Activated CD4-positive, alpha-beta T cell treated with anti-CD3 and anti-CD28 coated beads for 36 hours (primary cell): ENCODE measurements at regions of chr19 and their contacts with region 1.

Region 1: GRCh38 chr19:10000171-10000826 is 10.0 kb downstream of the COL5A3 start:
- DNase-seq: peak; percentile 85
- ATAC-seq: peak; percentile 62
- H3K4me3 Mint-ChIP-seq: no peak overlapping the region
- H3K27ac Mint-ChIP-seq: no peak overlapping the region
- H3K4me1 Mint-ChIP-seq: peaks cover 8% of the 10 kb centered on the region
- H3K27me3 Mint-ChIP-seq: peaks cover 27% of the 10 kb centered on the region

Region 2: GRCh38 chr19:9205501-9206113 is 794.7 kb before region 1 on chr19:
- CTCF ChIA-PET with region 1: no interaction called
- POLR2A ChIA-PET with region 1: no interaction called
- intact Hi-C with region 1: loop called in 1 of 2 experiments (anchors 5 kb)
- DNase-seq: peak; percentile 79
- ATAC-seq: peak; percentile 75
- H3K4me3 Mint-ChIP-seq: no peak overlapping the region
- H3K27ac Mint-ChIP-seq: no peak overlapping the region
- H3K4me1 Mint-ChIP-seq: no peaks in the 10 kb centered on the region
- H3K27me3 Mint-ChIP-seq: peaks cover 9% of the 10 kb centered on the region

Region 3: GRCh38 chr19:9818734-9819589 is 181.3 kb before region 1 on chr19 and contains the start of gene FBXL12:
- CTCF ChIA-PET with region 1: no interaction called
- POLR2A ChIA-PET with region 1: no interaction called
- intact Hi-C with region 1: no loop called
- DNase-seq: peak; percentile 100
- ATAC-seq: peak; percentile 92
- H3K4me3 Mint-ChIP-seq: peak within 1 kb of the TSS; percentile 88
- H3K27ac Mint-ChIP-seq: peak within 1 kb of the TSS; percentile 90
- H3K4me1 Mint-ChIP-seq: peaks cover 26% of the 10 kb centered on the region
- H3K27me3 Mint-ChIP-seq: no peaks in the 10 kb centered on the region
- total RNA-seq, gene FBXL12: 19.9 to 22.5 TPM

Region 4: DNA sequence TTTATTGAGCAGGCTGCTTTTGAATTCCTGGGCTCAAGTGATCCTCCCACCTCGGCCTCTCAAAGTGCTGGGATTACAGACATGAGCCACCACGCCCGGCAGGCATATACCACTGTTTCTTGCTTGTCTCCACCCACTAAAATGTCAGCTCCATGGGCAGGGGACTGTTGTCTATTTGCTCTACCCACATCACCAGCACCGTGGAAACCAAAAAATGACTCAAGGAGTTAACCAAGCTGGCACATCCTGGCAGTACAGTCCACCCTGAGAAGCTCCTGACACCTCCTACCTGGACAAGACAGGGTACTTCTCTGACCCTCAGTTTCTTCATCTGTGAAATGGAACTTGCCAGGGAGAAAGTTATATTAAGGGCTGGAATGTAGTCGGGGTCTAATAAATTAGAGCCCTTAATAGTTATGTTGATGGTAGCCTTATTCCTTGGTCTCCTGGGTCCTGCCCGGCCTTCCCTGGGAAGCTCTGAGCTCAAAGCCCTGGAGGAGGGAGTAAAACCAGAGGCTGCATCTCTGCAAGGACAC is 26.9 kb after region 1 on chr19:
- CTCF ChIA-PET with region 1: interaction called, 18 read pairs
- POLR2A ChIA-PET with region 1: no interaction called
- intact Hi-C with region 1: loop called in 1 of 2 experiments (anchors 1 kb)
- DNase-seq: peak; percentile 10
- ATAC-seq: peak; percentile 45
- H3K4me3 Mint-ChIP-seq: no peak overlapping the region
- H3K27ac Mint-ChIP-seq: no peak overlapping the region
- H3K4me1 Mint-ChIP-seq: no peaks in the 10 kb centered on the region
- H3K27me3 Mint-ChIP-seq: peaks cover 10% of the 10 kb centered on the region

Region 5: GRCh38 chr19:10076535-10076934 is 76.2 kb after region 1 on chr19:
- CTCF ChIA-PET with region 1: no interaction called
- POLR2A ChIA-PET with region 1: no interaction called
- intact Hi-C with region 1: no loop called
- DNase-seq: no peak
- ATAC-seq: no peak
- H3K4me3 Mint-ChIP-seq: no peak overlapping the region
- H3K27ac Mint-ChIP-seq: no peak overlapping the region
- H3K4me1 Mint-ChIP-seq: no peaks in the 10 kb centered on the region
- H3K27me3 Mint-ChIP-seq: peaks cover 1% of the 10 kb centered on the region